Activated CD4-positive, alpha-beta memory T cell treated with anti-CD3 and anti-CD28 coated beads, Interleukin-2, amount 10 ng/mL, durations not matched to agents 7 days and 5 days (primary cell): ENCODE measurements at regions of chr3 and their contacts with region 1.

Region 1: GRCh38 chr3:49339945-49340800 is at the start of gene USP4:
- DNase-seq: peak; percentile 95
- H3K4me3 Mint-ChIP-seq: peak within 1 kb of the TSS; percentile 95
- H3K27ac Mint-ChIP-seq: peak within 1 kb of the TSS; percentile 98
- H3K4me1 Mint-ChIP-seq: peaks cover 42% of the 10 kb centered on the region
- H3K27me3 Mint-ChIP-seq: no peaks in the 10 kb centered on the region
- total RNA-seq, gene USP4: 77.8 to 85.0 TPM

Region 2: DNA sequence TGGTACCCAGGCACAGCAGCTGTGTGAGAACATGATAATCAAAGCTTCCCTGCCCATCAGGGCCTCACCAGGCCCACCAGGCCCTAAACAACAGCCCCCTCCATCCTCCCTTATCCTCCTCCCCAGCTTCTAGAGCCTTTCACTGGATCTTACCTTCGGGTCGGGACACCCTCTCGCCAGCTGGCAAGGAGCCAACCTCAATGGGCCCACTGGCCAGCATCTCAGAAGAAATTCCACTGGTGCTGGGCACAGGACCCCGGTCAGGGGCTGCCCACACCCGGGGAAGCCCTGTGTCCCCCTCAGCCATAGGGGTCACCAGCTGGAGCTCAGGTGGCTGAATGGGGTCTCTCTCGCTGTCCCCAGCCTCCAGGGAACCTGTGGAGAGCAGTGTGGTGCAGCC is 228.8 kb before region 1 on chr3:
- CTCF ChIA-PET with region 1: no interaction called
- POLR2A ChIA-PET with region 1: no interaction called
- DNase-seq: no peak
- H3K4me3 Mint-ChIP-seq: no peak overlapping the region
- H3K27ac Mint-ChIP-seq: no peak overlapping the region
- H3K4me1 Mint-ChIP-seq: no peaks in the 10 kb centered on the region
- H3K27me3 Mint-ChIP-seq: no peaks in the 10 kb centered on the region

Region 3: DNA sequence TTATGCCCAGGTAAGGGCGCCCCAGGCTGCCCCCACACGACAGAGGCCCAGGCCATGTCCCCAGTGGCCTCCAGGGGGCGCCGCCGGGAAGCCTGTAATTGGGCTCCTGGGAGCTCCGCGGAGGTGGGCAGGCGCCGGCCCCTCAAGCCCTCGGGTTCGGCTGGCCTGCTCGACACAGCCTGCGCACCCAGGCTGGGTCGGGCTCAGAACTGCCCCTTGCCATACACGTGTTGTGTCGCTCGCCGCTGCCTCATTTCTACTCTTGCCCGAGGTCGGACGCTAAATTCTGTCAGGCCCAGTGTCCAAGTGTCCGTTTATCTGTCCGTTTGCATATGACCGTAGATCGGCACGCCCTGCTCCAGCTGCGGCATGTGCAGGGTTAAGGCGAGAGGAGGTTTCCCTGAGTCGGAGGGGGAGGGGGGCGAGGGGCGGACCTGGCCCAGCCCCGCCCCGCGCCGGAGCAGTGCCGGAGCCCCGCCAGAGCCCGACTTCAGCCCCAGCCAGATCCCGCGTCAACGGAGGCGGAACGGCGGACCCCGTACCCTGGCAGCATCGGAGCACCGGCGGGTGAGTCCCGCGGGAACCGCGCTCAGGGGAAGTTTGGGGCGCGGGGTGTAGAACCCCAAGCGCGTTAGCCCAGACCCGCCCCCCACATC is 168.9 kb before region 1 on chr3 and contains the start of gene KLHDC8B:
- CTCF ChIA-PET with region 1: interaction called, 11 read pairs
- POLR2A ChIA-PET with region 1: no interaction called
- DNase-seq: peak; percentile 85
- H3K4me3 Mint-ChIP-seq: peak within 1 kb of the TSS; percentile 76
- H3K27ac Mint-ChIP-seq: no peak within 1 kb of the TSS
- H3K4me1 Mint-ChIP-seq: peaks cover 16% of the 10 kb centered on the region
- H3K27me3 Mint-ChIP-seq: peaks cover 2% of the 10 kb centered on the region
- total RNA-seq, gene KLHDC8B: 1.2 to 1.4 TPM

Region 4: GRCh38 chr3:49351521-49352011 is 11.4 kb after region 1 on chr3:
- CTCF ChIA-PET with region 1: interaction called, 37 read pairs
- POLR2A ChIA-PET with region 1: interaction called, 50 read pairs
- DNase-seq: no peak
- H3K4me3 Mint-ChIP-seq: no peak overlapping the region
- H3K27ac Mint-ChIP-seq: peak overlapping the region; percentile 87
- H3K4me1 Mint-ChIP-seq: peaks cover 27% of the 10 kb centered on the region
- H3K27me3 Mint-ChIP-seq: no peaks in the 10 kb centered on the region

Region 5: GRCh38 chr3:49411968-49412631 is 71.9 kb after region 1 on chr3 and contains the starts of genes RHOA and TCTA:
- CTCF ChIA-PET with region 1: interaction called, 21 read pairs
- POLR2A ChIA-PET with region 1: interaction called, 82 read pairs
- DNase-seq: peak; percentile 99
- H3K4me3 Mint-ChIP-seq: peak within 1 kb of the TSS; percentile 98
- H3K27ac Mint-ChIP-seq: peak within 1 kb of the TSS; percentile 99
- H3K4me1 Mint-ChIP-seq: peaks cover 68% of the 10 kb centered on the region
- H3K27me3 Mint-ChIP-seq: peaks cover 2% of the 10 kb centered on the region
- total RNA-seq, gene RHOA: 504 to 505 TPM
- total RNA-seq, gene TCTA: 19.7 to 22.4 TPM

Region 6: GRCh38 chr3:49454458-49454857 is 114.3 kb after region 1 on chr3:
- CTCF ChIA-PET with region 1: interaction called, 36 read pairs
- POLR2A ChIA-PET with region 1: interaction called, 14 read pairs
- DNase-seq: no peak
- H3K4me3 Mint-ChIP-seq: no peak overlapping the region
- H3K27ac Mint-ChIP-seq: no peak overlapping the region
- H3K4me1 Mint-ChIP-seq: no peaks in the 10 kb centered on the region
- H3K27me3 Mint-ChIP-seq: no peaks in the 10 kb centered on the region